ENCODE measurements at regions of chr21 and their contacts with region 1.

Region 1: DNA sequence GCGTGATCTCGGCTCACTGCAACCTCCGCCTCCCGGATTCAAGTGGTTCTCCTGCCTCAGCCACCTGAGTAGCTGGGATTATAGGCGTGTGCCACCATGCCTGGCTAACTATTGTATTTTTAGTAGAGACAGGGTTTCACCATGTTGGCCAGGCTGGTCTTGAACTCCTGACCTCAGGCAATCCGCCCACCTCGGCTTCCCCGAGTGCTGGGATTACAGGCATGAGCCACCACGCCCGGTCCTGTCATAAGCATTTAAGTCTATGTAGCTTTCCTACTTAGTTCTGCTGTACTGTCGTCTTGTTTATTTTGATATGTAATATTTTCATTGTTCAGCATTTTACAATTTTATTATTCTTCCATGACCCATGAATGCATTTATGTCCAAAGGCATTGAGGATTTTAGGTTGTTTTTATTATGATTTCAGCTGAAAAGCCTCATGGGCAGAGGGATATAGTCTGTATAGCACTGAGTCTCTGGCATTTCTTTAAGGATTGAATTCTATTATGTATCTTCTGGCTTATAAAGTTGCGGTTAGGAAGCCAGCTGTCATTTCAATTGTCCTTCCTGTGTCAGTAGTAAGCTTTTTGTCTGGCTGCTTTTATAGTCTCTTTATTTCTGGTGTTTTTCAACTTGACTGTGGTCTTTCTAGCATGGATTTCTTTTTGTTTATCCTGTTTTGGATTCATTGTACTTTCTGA is 9.2 kb downstream of the AGPAT3 start:
- H3K4me3 Mint-ChIP-seq: no peak overlapping the region
- H3K27ac Mint-ChIP-seq: no peak overlapping the region
- H3K4me1 Mint-ChIP-seq: peaks cover 68% of the 10 kb centered on the region
- H3K27me3 Mint-ChIP-seq: no peaks in the 10 kb centered on the region

Region 2: GRCh38 chr21:43718872-43719747 is 155.1 kb before region 1 on chr21 and contains the start of gene PDXK:
- intact Hi-C with region 1: no loop called
- H3K4me3 Mint-ChIP-seq: peak within 1 kb of the TSS; percentile 96
- H3K27ac Mint-ChIP-seq: peak within 1 kb of the TSS; percentile 91
- H3K4me1 Mint-ChIP-seq: peaks cover 71% of the 10 kb centered on the region
- H3K27me3 Mint-ChIP-seq: peaks cover 23% of the 10 kb centered on the region

Region 3: GRCh38 chr21:43938751-43939442 is 64.7 kb after region 1 on chr21:
- intact Hi-C with region 1: loop called (anchors 10 kb)
- H3K4me3 Mint-ChIP-seq: peak overlapping the region; percentile 75
- H3K27ac Mint-ChIP-seq: peak overlapping the region; percentile 60
- H3K4me1 Mint-ChIP-seq: peaks cover 29% of the 10 kb centered on the region
- H3K27me3 Mint-ChIP-seq: no peaks in the 10 kb centered on the region

Region 4: DNA sequence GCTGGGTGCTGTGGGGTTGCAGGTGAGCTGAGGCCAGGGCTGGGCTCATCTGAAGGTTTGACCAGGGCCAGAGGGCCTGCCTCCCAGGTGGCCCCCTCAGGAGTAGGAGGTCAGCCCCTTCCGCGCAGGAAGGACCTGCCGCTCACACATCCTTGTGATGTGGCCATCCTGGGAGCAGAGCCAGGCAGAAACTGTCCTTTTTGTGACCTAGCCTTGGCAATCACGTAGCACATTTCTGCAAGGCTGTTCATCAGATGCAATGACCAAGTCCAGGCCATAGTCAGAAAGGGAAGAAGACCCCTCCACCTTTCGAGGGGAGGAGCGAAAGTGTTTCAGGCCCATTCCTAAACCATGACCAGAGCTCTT is 82.4 kb after region 1 on chr21:
- intact Hi-C with region 1: no loop called
- H3K4me3 Mint-ChIP-seq: no peak overlapping the region
- H3K27ac Mint-ChIP-seq: no peak overlapping the region
- H3K4me1 Mint-ChIP-seq: peaks cover 3% of the 10 kb centered on the region
- H3K27me3 Mint-ChIP-seq: no peaks in the 10 kb centered on the region

Measured in dendritic cell treated with granulocyte-macrophage colony-stimulating factor and Interleukin-4, amounts not matched to agents 40 ng/mL and 50 ng/mL, for 4 days (primary cell).